Panc1 (cell line): ENCODE measurements at regions of chr1 and their contacts with region 1.

Region 1: GRCh38 chr1:187605736-187606135 is 777.0 kb downstream of the PLA2G4A start:
- DNase-seq: no peak
- ATAC-seq: no peak
- H3K4me3 ChIP-seq: no peak overlapping the region
- H3K27ac ChIP-seq: no peak overlapping the region
- H3K4me1 ChIP-seq: no peaks in the 10 kb centered on the region
- H3K27me3 ChIP-seq: no peaks in the 10 kb centered on the region
- CTCF ChIP-seq: no peak

Region 2: DNA sequence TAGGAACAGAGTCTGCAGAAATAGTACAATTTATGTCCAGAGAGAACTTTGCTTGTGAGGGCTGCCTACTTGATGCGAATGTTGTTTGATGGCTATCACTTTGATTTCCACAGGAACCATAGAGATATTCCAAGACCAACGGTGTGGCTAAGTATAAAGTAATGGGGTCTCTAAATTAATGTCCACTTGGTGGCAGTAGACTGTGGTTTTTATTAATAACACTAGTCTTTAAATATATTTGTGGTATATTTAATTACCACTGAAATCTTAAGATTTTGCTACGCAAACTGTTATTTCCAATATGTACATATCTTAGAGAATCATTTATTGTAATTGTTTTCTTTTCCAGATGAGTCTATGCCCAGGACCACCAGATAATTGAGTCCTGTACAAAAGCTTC is 129.1 kb before region 1 on chr1:
- CTCF ChIA-PET with region 1: no interaction called
- POLR2A ChIA-PET with region 1: no interaction called
- in situ Hi-C with region 1: no loop called
- intact Hi-C with region 1: loop called (anchors 5 kb)
- DNase-seq: no peak
- ATAC-seq: no peak
- H3K4me3 ChIP-seq: no peak overlapping the region
- H3K27ac ChIP-seq: no peak overlapping the region
- H3K4me1 ChIP-seq: no peaks in the 10 kb centered on the region
- H3K27me3 ChIP-seq: no peaks in the 10 kb centered on the region
- CTCF ChIP-seq: peak; percentile 19; the same call in 1 of the 2 replicates